ENCODE measurements at regions of chr9 and their contacts with region 1.

Region 1: DNA sequence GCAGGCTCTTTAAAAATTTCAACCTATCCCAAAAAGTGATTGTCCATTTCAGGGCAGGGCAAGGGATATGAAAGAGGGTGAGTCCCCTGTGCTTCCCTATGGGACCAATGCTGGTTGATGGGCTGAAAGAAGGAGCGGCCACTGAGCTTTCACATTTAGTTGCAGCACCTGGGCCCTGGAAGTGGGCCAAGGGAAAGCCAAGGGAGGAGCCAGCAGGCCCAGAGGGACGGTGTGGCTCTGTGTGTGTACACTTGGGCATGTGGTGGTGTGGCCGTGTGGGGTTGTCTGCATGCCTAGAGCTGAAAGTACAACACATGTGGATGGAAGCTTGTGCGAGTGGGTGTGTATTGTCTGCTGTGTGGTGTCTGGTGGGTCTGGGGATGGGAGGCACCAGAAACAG is 14.0 kb upstream of the PSMD5 start:
- DNase-seq: no peak
- H3K4me3 ChIP-seq: no peak overlapping the region
- H3K27ac ChIP-seq: no peak overlapping the region
- H3K4me1 ChIP-seq: no peaks in the 10 kb centered on the region
- H3K27me3 ChIP-seq: no peaks in the 10 kb centered on the region
- CTCF ChIP-seq: no peak

Region 2: DNA sequence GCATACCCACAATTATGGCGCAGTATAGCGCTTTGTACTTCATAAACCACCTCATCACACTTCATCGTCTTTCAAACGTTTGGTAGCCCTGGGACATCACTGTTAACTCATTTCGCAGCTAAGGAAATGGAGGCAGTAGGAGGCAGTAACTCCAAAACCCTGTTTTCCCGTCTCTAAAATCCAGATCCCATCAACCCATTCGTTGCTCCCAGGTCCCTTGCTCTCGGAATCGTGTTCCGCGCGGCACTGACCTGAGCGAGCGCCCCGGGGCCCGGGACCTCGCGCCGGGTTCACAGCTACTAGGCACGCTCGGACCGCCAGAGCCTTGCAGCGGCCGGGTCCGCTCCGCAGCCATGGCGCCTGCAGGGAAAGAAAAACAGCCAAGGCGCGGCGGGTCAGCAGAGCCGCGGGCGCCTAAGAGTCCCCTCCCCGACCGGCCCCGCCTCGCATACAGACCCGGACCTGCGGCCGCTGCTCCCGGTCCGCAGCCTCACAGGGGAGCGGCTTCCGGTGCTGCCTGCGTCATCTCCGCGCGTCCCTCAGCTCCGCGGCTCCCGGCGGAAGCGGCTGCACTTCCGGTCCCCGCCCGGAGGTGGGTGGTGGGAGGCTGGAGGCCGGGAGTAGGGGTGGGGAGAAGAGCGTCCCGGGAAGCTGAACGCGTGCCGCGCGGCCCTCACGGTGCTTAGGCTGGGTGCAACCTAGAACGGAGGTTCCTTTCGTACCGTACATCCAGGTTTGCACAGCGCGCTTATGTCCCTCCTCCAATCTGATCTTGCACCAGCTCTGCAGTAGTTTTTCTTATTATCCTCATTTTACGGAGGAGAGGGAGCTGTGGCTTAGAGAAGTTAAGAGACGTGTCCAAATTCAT is 63.6 kb before region 1 on chr9 and contains the start of gene FBXW2:
- CTCF ChIA-PET with region 1: no interaction called
- dilution Hi-C with region 1: loop called (anchors 5 kb)
- in situ Hi-C with region 1: no loop called
- intact Hi-C with region 1: no loop called
- DNase-seq: peak; percentile 90
- H3K4me3 ChIP-seq: peak within 1 kb of the TSS; percentile 74 to 100 (median 96)
- H3K27ac ChIP-seq: peak within 1 kb of the TSS; percentile 92
- H3K4me1 ChIP-seq: peaks cover 19% of the 10 kb centered on the region
- H3K27me3 ChIP-seq: no peaks in the 10 kb centered on the region
- CTCF ChIP-seq: no peak
- total RNA-seq, gene FBXW2: 39.3 to 70.1 TPM